Left colon (tissue), 2 donors: ENCODE measurements at regions of chr6 and their contacts with region 1.

Region 1: DNA sequence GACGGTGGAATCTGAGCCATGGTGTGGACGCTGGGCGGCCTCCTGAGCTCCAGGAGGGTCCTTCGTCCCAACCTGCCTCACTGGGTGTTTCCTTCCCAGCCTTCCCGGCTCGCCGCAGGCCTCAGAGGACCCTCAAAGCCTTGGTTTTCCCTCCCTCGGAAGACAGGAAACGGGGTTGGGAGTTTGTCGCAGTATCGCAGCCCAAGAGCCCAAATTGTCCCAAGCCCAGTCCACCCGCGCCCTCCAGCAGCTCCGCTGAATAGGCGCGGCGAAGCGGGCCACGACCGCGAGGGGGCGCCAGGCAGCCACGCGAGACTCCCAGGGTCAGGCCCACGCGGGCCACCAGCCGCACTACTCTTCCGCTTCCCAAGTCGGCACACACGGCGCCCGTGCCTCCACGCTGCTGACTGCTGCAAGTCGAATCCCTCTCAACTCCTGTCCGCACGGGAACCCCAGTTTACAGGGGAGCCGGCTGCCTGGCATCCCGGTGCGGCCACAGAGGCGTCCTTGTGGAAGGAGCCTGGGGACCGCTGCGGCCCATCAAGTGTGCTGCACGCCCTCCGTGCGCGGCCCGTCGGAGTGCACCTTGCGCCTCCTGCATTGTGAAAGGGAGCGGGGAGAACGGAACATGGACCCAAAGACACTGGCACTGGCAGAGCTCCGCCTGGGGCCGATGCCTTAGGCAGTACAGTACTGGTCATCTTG is 40.4 kb upstream of the HMGA1 start:
- DNase-seq: peak; percentile 70 to 91
- ATAC-seq: peak; percentile 99

Region 2: GRCh38 chr6:34414999-34415858 is 219.0 kb after region 1 on chr6:
- intact Hi-C with region 1: loop called in 1 of 2 experiments (anchors 2 kb)
- DNase-seq: peak; percentile 61 to 63
- ATAC-seq: peak; percentile 94

Region 3: DNA sequence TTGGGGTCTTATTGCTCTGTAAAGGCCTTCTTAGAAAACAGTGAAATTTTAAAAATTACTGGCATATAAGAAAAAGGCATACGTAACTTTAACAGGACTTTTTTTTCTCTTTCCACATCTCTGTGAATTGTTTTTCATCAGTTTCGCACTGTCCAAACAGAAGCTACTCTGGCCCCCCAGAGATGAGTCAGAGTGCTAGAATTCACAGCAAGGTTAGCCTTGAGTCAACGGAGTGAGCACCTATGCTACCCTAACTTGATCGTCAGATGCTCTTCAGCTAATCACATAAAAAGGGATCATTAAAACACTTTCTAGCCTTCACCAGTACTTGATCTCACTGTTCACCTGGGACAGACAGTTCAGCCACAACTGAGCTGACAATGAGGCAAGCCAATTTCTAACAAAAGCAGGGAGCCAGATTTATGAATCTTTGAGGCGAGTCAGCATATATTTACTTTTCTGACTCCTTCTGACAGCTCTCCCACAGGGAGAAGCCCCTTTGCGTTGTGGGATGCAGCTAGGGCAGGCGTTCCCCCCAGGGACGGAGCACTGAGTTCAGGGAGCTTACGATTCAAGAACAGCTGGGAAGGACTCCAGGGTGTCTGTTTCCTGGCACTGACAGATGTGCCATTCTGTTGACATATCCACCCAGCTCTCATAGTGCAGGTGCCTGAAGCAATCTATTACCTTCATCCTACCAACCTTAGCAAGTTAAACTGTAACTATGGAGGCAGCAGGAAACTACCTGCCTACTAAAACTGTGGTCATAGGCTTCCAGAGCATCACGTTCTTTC is 406.2 kb after region 1 on chr6:
- intact Hi-C with region 1: loop called in 1 of 2 experiments (anchors 10 kb)
- DNase-seq: peak; percentile 54 to 59
- ATAC-seq: peak; percentile 98